GM12878 (cell line): ENCODE measurements at regions of chr21 and their contacts with region 1.

Region 1: DNA sequence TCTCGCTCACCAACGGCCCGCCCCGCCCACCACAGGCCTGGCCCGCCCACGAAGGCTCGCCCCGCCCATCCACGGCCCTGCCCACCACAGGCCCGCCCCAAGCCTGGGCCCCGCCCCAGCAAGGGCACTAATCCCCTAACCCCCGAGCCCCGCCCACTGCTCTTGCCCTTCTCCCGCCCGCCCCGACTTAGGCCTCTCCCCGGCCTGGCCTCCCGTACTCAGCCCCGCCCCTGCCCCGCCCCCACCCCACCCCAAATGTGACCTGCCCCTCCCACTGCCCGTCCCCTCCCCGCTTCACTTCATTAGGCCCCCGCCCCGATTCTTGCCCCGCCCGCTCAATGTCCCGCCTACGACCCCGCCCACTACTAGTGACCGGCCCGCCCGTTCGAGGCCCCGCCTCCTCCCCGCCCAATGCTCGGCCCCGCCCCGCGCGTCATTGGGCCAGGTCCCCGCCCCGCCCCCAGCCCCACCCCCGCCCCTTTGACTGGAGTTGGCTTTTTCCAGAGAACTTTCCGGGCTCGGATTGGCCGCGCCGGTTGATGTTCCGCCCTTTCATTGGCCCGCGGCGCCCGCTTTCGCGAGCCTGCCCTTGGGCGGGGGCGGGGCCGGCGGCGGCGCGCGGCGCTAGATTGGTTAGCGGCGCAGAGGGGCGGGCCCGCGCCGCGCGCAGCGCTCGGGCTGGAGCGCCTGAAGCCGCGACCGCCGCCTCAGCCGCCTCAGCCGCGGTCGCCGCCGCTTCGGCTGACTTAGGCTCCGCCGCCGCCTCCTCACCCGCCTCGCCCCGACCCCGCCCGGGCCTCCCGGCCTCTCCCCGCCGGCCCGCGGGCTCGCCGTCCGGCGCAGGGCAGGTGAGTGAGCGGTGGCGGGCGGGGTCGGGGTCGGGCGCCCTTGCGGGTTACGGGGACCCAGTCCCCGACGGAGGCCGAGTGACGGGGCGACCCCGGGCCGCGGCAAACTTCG is at the start of gene PCBP3:
- DNase-seq: peak; percentile 66
- ATAC-seq: peak; percentile 86
- H3K4me3 ChIP-seq: peak within 1 kb of the TSS; percentile 60; the same call in 1 of the 2 replicates
- H3K27ac ChIP-seq: no peak within 1 kb of the TSS
- H3K4me1 ChIP-seq: peaks cover 30% of the 10 kb centered on the region
- H3K27me3 ChIP-seq: no peaks in the 10 kb centered on the region
- CTCF ChIP-seq: no peak
- EP300 ChIP-seq: no peak
- POLR2A ChIP-seq: peak; percentile 65
- RAD21 ChIP-seq: no peak
- polyA plus RNA-seq, gene PCBP3: not detected

Region 2: GRCh38 chr21:45443595-45444181 is 199.6 kb before region 1 on chr21:
- CTCF ChIA-PET with region 1: no interaction called
- POLR2A ChIA-PET with region 1: no interaction called
- RAD21 ChIA-PET with region 1: no interaction called
- SMC1A ChIA-PET with region 1: no interaction called
- in situ Hi-C with region 1: no loop called
- intact Hi-C with region 1: no loop called
- DNase-seq: no peak
- ATAC-seq: no peak
- H3K4me3 ChIP-seq: no peak overlapping the region
- H3K27ac ChIP-seq: no peak overlapping the region
- H3K4me1 ChIP-seq: no peaks in the 10 kb centered on the region
- H3K27me3 ChIP-seq: no peaks in the 10 kb centered on the region
- CTCF ChIP-seq: peak; percentile 7 to 17 (median 7); a peak in 4 of 6 replicates
- EP300 ChIP-seq: no peak
- POLR2A ChIP-seq: no peak
- RAD21 ChIP-seq: no peak

Region 3: GRCh38 chr21:45590246-45590725 is 53.0 kb before region 1 on chr21:
- CTCF ChIA-PET with region 1: interaction called, 3 read pairs
- POLR2A ChIA-PET with region 1: interaction called, 15 read pairs
- RAD21 ChIA-PET with region 1: interaction called, 25 read pairs
- SMC1A ChIA-PET with region 1: interaction called, 22 read pairs
- in situ Hi-C with region 1: no loop called
- intact Hi-C with region 1: loop called (anchors 2 kb)
- DNase-seq: no peak
- ATAC-seq: peak; percentile 51
- H3K4me3 ChIP-seq: no peak overlapping the region
- H3K27ac ChIP-seq: no peak overlapping the region
- H3K4me1 ChIP-seq: peaks cover 20% of the 10 kb centered on the region
- H3K27me3 ChIP-seq: no peaks in the 10 kb centered on the region
- CTCF ChIP-seq: no peak
- EP300 ChIP-seq: no peak
- POLR2A ChIP-seq: no peak
- RAD21 ChIP-seq: no peak

Region 4: GRCh38 chr21:45615145-45615711 is 28.1 kb before region 1 on chr21:
- CTCF ChIA-PET with region 1: interaction called, 13 read pairs
- POLR2A ChIA-PET with region 1: interaction called, 24 read pairs
- RAD21 ChIA-PET with region 1: interaction called, 20 read pairs
- SMC1A ChIA-PET with region 1: interaction called, 4 read pairs
- in situ Hi-C with region 1: no loop called
- intact Hi-C with region 1: loop called (anchors 1 kb)
- DNase-seq: peak; percentile 78
- ATAC-seq: peak; percentile 93
- H3K4me3 ChIP-seq: 0 out of 2 replicates have a peak overlapping the region, but pooled peaks have one; percentile 38
- H3K27ac ChIP-seq: peak overlapping the region; percentile 50; the same call in 1 of the 2 replicates
- H3K4me1 ChIP-seq: peaks cover 10% of the 10 kb centered on the region
- H3K27me3 ChIP-seq: no peaks in the 10 kb centered on the region
- CTCF ChIP-seq: peak in 1 of 3 experiments; percentile 5; a peak in 1 of 6 replicates
- EP300 ChIP-seq: peak; percentile 93 to 94; a peak in 3 of 4 replicates
- POLR2A ChIP-seq: no peak
- RAD21 ChIP-seq: no peak

Region 5: DNA sequence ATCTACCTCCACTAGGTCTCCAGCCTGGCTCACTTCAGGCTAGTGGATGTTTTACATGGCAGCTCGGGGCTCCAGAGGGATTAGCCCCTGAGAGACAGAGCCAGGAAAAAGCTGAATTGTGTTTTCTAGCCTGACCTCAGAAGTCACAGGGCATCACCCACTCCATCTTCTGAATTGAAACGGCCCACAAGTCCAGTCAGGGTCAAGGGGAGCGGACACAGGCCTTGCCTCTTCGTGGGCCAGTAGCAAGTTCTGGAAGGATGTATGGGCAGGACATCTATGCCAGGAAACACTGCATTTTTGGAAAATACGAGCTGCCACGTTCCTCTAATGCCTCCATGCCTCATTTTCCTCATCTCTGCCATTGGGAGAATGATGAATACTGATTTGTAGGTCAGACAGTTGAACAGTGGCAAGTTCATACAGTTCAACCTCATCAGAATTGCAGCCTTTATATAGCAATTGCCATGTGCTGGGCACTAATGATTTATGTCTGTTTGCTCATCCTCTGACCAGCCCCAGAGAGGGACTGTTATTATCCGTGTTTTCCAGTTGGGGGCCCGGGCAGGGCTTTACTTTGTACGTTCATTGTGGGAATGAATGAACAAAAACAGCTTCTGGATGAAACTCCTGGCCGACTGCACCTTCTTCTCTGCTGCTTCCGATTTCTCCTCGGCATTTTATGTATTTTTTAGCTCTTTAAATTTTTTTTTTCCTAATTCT is 22.9 kb before region 1 on chr21:
- CTCF ChIA-PET with region 1: interaction called, 13 read pairs
- POLR2A ChIA-PET with region 1: interaction called, 24 read pairs
- RAD21 ChIA-PET with region 1: interaction called, 20 read pairs
- SMC1A ChIA-PET with region 1: interaction called, 11 read pairs
- in situ Hi-C with region 1: no loop called
- intact Hi-C with region 1: loop called (anchors 1 kb)
- DNase-seq: no peak
- ATAC-seq: no peak
- H3K4me3 ChIP-seq: no peak overlapping the region
- H3K27ac ChIP-seq: no peak overlapping the region
- H3K4me1 ChIP-seq: peaks cover 4% of the 10 kb centered on the region
- H3K27me3 ChIP-seq: no peaks in the 10 kb centered on the region
- CTCF ChIP-seq: no peak
- EP300 ChIP-seq: no peak
- POLR2A ChIP-seq: no peak
- RAD21 ChIP-seq: no peak

Region 6: DNA sequence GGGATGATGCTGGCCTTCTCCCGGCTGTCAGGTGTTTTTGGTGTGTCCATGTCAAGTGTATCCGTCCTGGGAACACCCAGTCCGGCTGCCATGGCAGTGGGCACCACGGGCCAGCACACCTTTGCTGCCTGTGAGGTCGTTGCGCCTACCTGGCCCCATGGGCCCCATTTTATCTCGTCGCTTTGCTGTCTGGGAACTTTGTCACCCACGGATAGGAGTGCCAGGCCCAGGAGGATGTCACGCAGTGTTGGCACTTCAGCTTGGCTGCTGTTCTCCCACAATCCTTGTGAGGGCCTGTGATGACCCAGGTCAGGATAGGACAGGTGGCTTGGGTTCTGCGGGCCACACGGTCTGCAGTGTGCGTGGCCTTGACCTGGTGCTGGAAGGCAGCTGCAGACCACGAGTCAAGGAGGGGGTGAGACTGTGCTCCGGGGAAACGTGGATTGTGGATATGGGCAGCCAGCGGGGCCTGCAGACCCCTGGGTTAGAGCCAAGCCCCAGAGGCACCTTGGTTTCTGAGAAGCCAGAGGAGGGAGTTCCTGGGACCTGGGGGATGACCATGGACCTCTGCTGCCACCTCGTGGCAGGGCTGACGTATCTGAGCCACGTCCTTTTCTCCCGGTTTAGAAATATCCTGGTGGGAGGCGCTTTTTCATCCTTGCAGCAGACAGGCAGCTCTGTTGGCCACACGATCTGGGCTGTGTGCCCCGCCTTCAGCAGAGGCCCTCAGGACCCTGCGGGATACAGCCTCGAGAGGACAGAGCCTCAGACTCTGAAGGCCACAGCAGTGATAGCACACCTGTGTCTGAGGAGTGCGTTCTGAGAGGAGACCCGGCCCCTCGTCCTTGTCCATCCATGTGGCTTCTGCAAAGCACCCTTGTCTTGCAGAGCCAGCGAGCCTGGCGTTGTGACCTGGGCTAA is 177.1 kb after region 1 on chr21:
- CTCF ChIA-PET with region 1: no interaction called
- POLR2A ChIA-PET with region 1: no interaction called
- RAD21 ChIA-PET with region 1: no interaction called
- SMC1A ChIA-PET with region 1: no interaction called
- in situ Hi-C with region 1: no loop called
- intact Hi-C with region 1: loop called (anchors 10 kb)
- DNase-seq: no peak
- ATAC-seq: peak; percentile 88
- H3K4me3 ChIP-seq: no peak overlapping the region
- H3K27ac ChIP-seq: no peak overlapping the region
- H3K4me1 ChIP-seq: peaks cover 4% of the 10 kb centered on the region
- H3K27me3 ChIP-seq: no peaks in the 10 kb centered on the region
- CTCF ChIP-seq: peak; percentile 83 to 94 (median 90); a peak in 5 of 6 replicates
- EP300 ChIP-seq: no peak
- POLR2A ChIP-seq: no peak
- RAD21 ChIP-seq: peak; percentile 94